ENCODE measurements at regions of chr17 and their contacts with region 1.

Region 1: GRCh38 chr17:59435238-59435637 is 103.8 kb downstream of the YPEL2 start:
- DNase-seq: no peak
- H3K4me3 Mint-ChIP-seq: no peak overlapping the region
- H3K27ac Mint-ChIP-seq: peak overlapping the region; percentile 88
- H3K4me1 Mint-ChIP-seq: peaks cover 64% of the 10 kb centered on the region
- H3K27me3 Mint-ChIP-seq: peaks cover 3% of the 10 kb centered on the region

Region 2: DNA sequence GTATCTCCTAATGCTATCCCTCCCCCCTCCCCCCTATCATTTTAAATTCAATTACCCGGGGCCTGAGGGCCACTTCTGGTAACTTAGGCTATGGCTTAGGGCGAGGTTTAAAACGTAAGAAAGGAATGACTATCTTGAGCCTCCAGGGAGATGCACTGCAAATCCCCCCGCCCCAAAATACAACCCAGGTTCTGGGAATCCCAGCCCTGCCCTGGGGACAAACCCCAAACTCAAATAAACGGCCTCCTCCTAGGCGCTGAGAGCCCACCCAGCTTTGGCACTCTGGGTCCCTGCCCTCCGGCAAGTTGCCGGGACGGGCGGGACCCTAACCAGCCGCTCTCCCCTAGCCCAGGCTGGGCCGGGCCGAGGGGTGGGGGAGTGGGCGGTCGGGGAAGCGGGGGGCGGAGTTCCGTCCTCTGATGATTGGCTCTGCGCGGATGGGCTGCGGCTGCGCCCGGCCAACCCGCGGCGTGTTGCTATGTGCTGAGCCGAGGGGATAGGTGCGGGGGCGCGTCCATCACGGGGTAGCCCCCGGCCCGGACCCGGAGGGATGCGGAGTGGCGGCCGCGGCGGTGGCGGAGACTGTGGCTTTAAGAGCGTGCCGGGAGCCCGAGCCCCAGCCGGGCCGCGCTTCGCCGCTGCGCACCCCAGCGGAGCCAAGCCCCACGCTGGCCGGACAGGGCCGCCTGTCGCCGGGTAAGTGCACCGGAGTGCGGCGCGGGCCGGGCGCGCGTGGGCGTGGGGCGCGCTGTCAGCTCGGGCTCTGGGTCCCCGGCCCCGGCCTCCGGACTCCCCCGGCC is 103.9 kb before region 1 on chr17 and contains the start of gene YPEL2:
- intact Hi-C with region 1: loop called (anchors 1 kb)
- DNase-seq: peak; percentile 88
- H3K4me3 Mint-ChIP-seq: peak within 1 kb of the TSS; percentile 89
- H3K27ac Mint-ChIP-seq: peak within 1 kb of the TSS; percentile 77
- H3K4me1 Mint-ChIP-seq: peaks cover 52% of the 10 kb centered on the region
- H3K27me3 Mint-ChIP-seq: peaks cover 27% of the 10 kb centered on the region
- total RNA-seq, gene YPEL2: 7.4 and 7.9 TPM in 2 replicates

Region 3: DNA sequence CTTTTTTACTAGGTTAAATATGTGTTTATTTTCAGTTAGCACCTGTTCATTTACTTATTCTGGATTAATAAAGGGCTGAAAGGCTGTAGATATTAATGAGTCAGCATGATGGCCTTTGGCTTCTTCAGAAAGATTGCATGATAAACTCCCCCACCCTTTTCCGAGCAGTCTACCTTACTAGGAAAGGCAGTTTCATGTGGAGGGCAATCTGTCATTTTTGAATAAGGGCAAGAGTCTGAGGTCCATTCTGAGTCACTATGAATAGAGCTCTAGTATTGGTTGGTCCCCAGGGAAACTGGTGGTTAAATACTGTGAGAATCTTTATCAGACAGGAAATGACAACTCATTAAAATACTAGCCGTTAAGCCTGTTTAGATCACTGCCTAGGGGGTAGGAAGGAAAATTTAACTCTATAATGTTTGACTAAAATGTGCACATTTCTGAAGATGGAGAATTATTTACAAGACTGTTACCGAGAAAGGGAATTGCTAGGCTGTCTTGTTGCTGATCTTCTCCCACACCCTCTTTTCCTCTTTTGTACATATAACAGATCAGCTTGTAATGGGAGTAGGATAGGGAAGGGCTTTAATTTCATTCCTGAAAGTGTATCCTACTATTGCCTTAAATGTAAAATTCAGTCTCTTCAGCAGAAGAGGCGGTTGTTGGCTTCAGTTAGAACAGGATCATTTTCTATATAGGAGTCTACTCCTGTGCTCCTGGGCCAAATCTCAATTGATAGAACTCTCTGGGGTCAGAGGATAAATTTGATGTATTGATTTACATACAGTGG is 394.2 kb after region 1 on chr17:
- intact Hi-C with region 1: loop called (anchors 5 kb)
- DNase-seq: peak; percentile 66
- H3K4me3 Mint-ChIP-seq: peak overlapping the region; percentile 90
- H3K27ac Mint-ChIP-seq: peak overlapping the region; percentile 100
- H3K4me1 Mint-ChIP-seq: peaks cover 79% of the 10 kb centered on the region
- H3K27me3 Mint-ChIP-seq: no peaks in the 10 kb centered on the region

Measured in activated T-helper 1 cell treated with anti-CD3 and anti-CD28 coated beads, Interleukin-12 subunit alpha, Interleukin-12 subunit beta, Interleukin-2, Interleukin-4 antibody, amounts not matched to agents 30 ng/mL and 10 ng/mL and 1 ng/mL, durations not matched to agents 14 hours and 24 hours and 36 hours (primary cell).